PC-9 (cell line): ENCODE measurements at regions of chr21 and their contacts with region 1.

Region 1: DNA sequence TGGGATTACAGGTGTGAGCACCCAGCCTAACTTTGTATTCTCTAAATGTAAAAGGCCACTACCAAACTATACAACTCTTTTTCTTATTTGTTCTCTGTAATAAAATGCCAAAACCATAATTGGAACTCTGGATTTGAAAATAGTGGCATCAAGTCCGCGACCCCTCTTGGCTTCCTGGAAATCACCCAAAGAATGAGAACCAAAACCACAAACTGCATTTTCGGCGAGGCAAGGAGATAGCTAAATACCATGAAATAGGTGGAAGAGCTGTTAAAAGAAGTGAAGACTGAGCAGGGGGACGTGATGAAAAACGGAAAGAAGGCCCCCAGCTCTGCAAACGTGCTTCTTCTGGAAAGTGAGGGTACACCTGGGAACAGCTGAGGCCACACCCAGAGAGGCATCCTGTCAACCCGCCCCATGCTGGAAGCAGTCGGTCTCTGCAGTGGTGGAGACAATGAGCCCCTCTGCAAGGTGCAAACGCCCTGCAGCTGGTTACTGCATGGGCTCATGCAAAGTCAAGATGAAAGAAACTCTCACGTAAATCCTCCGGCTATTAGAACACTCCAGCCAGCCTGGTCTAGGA is 22.5 kb downstream of the VPS26C start:
- DNase-seq: no peak
- H3K4me3 ChIP-seq: no peak overlapping the region
- H3K27ac ChIP-seq: no peak overlapping the region
- H3K4me1 ChIP-seq: no peaks in the 10 kb centered on the region
- H3K27me3 ChIP-seq: no peaks in the 10 kb centered on the region
- CTCF ChIP-seq: no peak

Region 2: GRCh38 chr21:37484535-37485474 is 240.2 kb after region 1 on chr21:
- CTCF ChIA-PET with region 1: no interaction called
- POLR2A ChIA-PET with region 1: no interaction called
- intact Hi-C with region 1: loop called (anchors 10 kb)
- DNase-seq: no peak
- H3K4me3 ChIP-seq: no peak overlapping the region
- H3K27ac ChIP-seq: no peak overlapping the region
- H3K4me1 ChIP-seq: no peaks in the 10 kb centered on the region
- H3K27me3 ChIP-seq: no peaks in the 10 kb centered on the region
- CTCF ChIP-seq: no peak